Activated CD4-positive, alpha-beta T cell treated with anti-CD3 and anti-CD28 coated beads for 36 hours (primary cell): ENCODE measurements at regions of chr7 and their contacts with region 1.

Region 1: DNA sequence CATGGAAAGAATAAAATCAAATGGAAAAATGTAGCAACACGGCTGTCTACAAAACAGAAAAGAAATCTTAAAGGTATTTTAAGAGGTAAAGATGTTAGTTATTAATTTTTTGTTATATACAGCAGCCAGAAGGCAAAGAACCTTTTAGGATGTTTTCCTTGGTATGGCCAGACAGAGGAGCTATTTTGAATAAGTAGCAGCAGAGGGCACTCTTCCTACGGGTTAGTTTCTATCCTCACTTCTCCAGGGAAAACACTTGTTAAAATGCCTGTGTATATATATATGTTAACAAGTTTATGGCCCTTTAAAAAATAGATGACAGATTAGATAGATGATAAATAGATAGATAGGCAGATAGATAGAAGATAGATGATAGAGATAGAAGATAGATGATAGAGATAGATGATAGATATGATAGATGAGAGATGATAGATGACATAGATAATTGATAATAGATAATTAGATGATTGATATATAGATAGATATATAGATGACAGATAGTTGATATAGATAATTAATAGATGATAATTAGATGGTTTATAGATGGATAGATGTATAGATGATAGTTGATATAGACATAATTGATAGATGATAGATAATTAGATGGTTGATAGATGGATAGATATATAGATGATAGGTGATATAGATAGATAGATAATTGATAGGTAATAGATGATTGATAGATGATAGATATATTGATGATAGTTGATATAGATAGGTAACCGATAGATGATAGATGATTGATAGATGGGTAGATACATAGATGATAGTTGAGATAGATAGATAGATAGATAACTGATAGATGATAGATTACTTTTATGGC is 57.8 kb upstream of the WIPF3 start:
- DNase-seq: no peak
- ATAC-seq: no peak
- H3K4me3 Mint-ChIP-seq: no peak overlapping the region
- H3K27ac Mint-ChIP-seq: no peak overlapping the region
- H3K4me1 Mint-ChIP-seq: no peaks in the 10 kb centered on the region
- H3K27me3 Mint-ChIP-seq: no peaks in the 10 kb centered on the region

Region 2: DNA sequence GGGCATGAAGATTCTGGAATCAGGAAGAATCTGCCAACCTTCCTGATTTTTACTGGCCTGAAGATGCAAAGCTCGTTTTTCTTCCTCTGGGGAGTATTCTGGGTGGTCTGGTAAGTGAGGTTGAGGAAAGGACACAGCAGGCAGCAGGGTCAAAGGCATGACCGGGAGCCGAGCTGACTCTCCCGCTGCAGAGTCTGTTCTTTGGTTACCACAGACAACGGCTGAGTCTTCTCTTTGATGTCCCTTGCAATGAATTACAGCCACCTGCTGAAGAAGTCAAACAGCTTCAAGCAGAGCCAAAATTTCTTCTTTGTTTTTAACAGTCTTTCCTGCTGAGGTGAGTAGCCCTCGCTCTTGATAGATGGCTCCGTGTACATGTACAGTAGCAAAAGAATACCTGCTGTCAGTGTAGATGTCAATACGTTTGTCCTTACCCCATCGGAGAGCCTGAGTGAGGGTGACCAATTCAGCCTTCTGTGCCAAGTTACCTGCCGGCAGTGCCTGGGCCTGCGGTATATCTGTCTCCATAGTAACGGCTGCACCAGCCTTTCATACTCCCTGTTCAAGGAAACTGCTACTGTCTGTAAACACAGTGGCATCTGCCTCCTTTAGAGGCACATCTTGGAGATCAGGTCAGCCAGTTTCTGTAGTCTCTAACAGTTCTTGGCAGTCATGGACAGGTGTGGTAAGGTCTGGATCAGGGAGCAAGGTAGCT is 108.5 kb before region 1 on chr7:
- CTCF ChIA-PET with region 1: no interaction called
- POLR2A ChIA-PET with region 1: no interaction called
- intact Hi-C with region 1: loop called in 1 of 2 experiments (anchors 10 kb)
- DNase-seq: no peak
- ATAC-seq: no peak
- H3K4me3 Mint-ChIP-seq: no peak overlapping the region
- H3K27ac Mint-ChIP-seq: no peak overlapping the region
- H3K4me1 Mint-ChIP-seq: no peaks in the 10 kb centered on the region
- H3K27me3 Mint-ChIP-seq: no peaks in the 10 kb centered on the region

Region 3: DNA sequence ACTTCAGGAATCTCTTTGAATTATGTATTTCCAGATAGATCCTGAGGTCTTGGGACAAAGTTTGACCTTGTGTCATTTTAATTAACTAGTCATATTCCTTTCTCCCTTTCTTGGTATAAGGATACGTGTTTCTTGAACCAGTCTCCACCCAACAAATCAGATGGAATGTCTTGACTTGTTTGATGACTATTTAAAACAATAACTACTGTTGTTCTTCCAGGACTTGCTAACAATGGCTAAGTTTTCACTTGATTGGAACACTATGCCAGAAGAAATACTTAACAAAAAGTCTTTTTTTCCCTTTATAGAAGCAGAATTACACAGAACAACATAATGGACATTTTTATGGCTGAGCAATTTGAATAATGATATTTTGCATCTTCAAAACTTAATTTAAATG is 14.8 kb after region 1 on chr7:
- CTCF ChIA-PET with region 1: no interaction called
- POLR2A ChIA-PET with region 1: no interaction called
- intact Hi-C with region 1: no loop called
- DNase-seq: no peak
- ATAC-seq: no peak
- H3K4me3 Mint-ChIP-seq: no peak overlapping the region
- H3K27ac Mint-ChIP-seq: no peak overlapping the region
- H3K4me1 Mint-ChIP-seq: no peaks in the 10 kb centered on the region
- H3K27me3 Mint-ChIP-seq: peaks cover 5% of the 10 kb centered on the region

Region 4: DNA sequence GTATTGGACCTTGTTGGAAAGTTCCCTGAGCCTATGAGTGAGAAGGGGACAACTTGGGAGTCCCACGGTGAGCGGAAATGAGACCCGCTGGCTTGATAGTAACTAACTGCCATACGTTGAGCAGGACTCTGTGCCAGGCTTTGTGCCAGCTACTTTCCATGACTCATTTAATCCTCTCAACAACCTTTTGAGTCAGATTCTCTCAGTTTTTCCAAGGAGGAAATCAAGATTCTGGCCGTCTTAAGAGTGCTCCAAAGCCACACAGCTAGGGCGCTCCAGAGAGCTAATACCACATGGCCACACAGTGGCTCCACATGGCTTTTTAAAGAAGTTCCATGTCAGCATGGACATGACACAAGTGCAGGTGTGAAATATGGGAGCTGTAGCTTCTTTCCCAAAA is 674.4 kb after region 1 on chr7:
- CTCF ChIA-PET with region 1: no interaction called
- POLR2A ChIA-PET with region 1: no interaction called
- intact Hi-C with region 1: no loop called
- DNase-seq: peak; percentile 33
- ATAC-seq: peak; percentile 51
- H3K4me3 Mint-ChIP-seq: no peak overlapping the region
- H3K27ac Mint-ChIP-seq: no peak overlapping the region
- H3K4me1 Mint-ChIP-seq: peaks cover 8% of the 10 kb centered on the region
- H3K27me3 Mint-ChIP-seq: no peaks in the 10 kb centered on the region

Region 5: DNA sequence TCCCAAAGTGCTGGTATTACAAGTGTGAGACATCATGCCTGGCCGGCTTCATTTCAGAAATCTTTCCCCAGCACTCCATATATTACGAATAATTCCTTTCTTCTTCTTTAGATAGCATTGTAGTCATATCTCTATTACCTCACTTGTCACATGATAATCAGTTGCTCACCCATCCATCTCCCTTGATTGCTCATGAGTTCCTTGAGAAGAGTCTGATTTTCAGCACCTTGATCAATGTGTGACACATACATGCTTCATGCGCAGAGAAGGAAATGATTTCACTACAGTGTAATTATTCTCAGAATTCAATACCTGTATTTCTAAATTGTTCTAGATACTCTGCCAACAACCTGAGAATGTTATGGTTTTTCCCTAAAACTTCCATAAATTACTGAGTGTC is 782.8 kb after region 1 on chr7:
- CTCF ChIA-PET with region 1: no interaction called
- POLR2A ChIA-PET with region 1: no interaction called
- intact Hi-C with region 1: no loop called
- DNase-seq: no peak
- ATAC-seq: peak; percentile 92
- H3K4me3 Mint-ChIP-seq: no peak overlapping the region
- H3K27ac Mint-ChIP-seq: no peak overlapping the region
- H3K4me1 Mint-ChIP-seq: peaks cover 10% of the 10 kb centered on the region
- H3K27me3 Mint-ChIP-seq: no peaks in the 10 kb centered on the region